Activated B cell treated with CpG ODN at 0.5 μM for 24 hours (primary cell): ENCODE measurements at regions of chrX and their contacts with region 1.

Region 1: GRCh38 chrX:9995855-9996339 is 28.7 kb downstream of the CLDN34 start:
- DNase-seq: peak; percentile 66
- ATAC-seq: peak; percentile 77
- H3K4me3 Mint-ChIP-seq: no peak overlapping the region
- H3K27ac Mint-ChIP-seq: no peak overlapping the region
- H3K4me1 Mint-ChIP-seq: peaks cover 12% of the 10 kb centered on the region
- H3K27me3 Mint-ChIP-seq: no peaks in the 10 kb centered on the region
- CTCF ChIP-seq: peak; percentile 76

Region 2: GRCh38 chrX:9873952-9874351 is 121.9 kb before region 1 on chrX:
- CTCF ChIA-PET with region 1: no interaction called
- POLR2A ChIA-PET with region 1: no interaction called
- intact Hi-C with region 1: loop called (anchors 1 kb)
- DNase-seq: peak; percentile 16
- ATAC-seq: peak; percentile 72
- H3K4me3 Mint-ChIP-seq: no peak overlapping the region
- H3K27ac Mint-ChIP-seq: no peak overlapping the region
- H3K4me1 Mint-ChIP-seq: peaks cover 2% of the 10 kb centered on the region
- H3K27me3 Mint-ChIP-seq: peaks cover 9% of the 10 kb centered on the region
- CTCF ChIP-seq: no peak

Region 3: GRCh38 chrX:9885150-9885549 is 110.7 kb before region 1 on chrX:
- CTCF ChIA-PET with region 1: interaction called, 5 read pairs
- POLR2A ChIA-PET with region 1: no interaction called
- intact Hi-C with region 1: loop called (anchors 1 kb)
- DNase-seq: peak; percentile 35
- ATAC-seq: peak; percentile 85
- H3K4me3 Mint-ChIP-seq: no peak overlapping the region
- H3K27ac Mint-ChIP-seq: no peak overlapping the region
- H3K4me1 Mint-ChIP-seq: peaks cover 2% of the 10 kb centered on the region
- H3K27me3 Mint-ChIP-seq: peaks cover 3% of the 10 kb centered on the region
- CTCF ChIP-seq: no peak

Region 4: DNA sequence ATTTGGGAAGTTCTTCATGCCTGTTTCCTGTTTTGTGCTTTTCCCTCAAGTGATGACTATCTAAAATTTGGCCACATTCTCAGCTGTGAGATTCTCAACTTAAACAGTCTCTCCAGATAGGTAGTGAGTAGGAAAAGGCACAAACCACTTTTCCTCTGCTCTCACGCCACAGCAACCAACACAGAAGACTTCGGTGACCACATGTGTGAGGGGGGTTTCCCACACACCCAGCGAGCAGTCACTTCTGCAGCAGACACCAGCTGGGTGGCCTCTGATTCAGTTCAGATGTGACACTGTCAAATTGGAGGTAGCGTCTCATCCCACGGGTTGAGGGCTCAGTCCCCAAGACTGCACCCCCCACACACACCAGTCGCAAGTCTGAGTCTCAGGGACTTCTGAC is 53.8 kb before region 1 on chrX:
- CTCF ChIA-PET with region 1: no interaction called
- POLR2A ChIA-PET with region 1: no interaction called
- intact Hi-C with region 1: loop called (anchors 5 kb)
- DNase-seq: peak; percentile 26
- ATAC-seq: peak; percentile 84
- H3K4me3 Mint-ChIP-seq: peak overlapping the region; percentile 56
- H3K27ac Mint-ChIP-seq: peak overlapping the region; percentile 25
- H3K4me1 Mint-ChIP-seq: peaks cover 29% of the 10 kb centered on the region
- H3K27me3 Mint-ChIP-seq: no peaks in the 10 kb centered on the region
- CTCF ChIP-seq: no peak

Region 5: DNA sequence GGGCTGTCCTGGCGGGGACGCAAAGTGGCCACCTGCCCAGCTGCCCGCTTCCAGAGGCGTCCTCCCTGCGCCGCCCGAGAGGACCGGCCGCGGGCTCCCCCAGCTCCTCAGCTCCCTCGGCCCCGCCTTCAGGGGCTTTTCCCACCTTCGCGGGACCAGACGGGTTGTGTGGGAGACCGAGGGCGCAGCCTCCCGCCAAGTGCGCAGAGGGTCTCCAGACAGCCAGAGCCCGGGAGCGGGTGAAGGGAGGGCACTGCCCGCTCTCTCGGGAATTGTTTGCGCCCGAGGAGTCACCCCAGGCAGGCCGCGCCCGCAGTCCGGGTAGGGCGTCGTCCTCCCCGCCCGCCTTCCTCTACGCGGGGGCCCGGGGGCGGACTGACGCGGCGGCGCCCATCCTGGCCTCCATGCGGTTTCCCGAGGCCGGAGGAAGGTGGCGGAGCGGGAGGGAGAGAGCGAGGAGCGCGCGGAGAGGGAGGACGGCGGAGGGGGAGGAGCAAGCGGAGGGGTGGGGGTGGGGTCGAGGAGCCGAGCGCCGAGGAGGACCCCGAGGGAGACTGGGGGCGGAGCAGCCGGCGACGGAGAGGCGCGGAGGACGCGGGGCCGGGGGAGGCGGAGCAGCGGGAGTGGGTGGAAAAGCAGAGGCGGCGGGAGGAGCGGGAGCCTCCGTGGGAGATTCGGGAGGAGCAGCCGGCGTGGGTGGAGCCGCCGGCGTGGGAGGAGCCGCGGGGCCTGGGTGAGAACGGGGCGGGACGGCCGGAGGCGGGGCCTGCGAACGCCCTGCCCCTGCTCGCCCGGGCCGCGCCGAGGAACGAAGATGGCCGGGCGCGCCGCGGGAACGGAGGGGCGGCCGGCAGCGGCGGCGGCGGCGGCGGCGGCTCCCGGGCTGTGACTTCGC is 18.8 kb after region 1 on chrX:
- CTCF ChIA-PET with region 1: interaction called, 5 read pairs
- POLR2A ChIA-PET with region 1: interaction called, 13 read pairs
- intact Hi-C with region 1: loop called (anchors 2 kb)
- DNase-seq: peak; percentile 81
- ATAC-seq: peak; percentile 83
- H3K4me3 Mint-ChIP-seq: peak overlapping the region; percentile 83
- H3K27ac Mint-ChIP-seq: peak overlapping the region; percentile 69
- H3K4me1 Mint-ChIP-seq: peaks cover 63% of the 10 kb centered on the region
- H3K27me3 Mint-ChIP-seq: no peaks in the 10 kb centered on the region
- CTCF ChIP-seq: no peak

Region 6: DNA sequence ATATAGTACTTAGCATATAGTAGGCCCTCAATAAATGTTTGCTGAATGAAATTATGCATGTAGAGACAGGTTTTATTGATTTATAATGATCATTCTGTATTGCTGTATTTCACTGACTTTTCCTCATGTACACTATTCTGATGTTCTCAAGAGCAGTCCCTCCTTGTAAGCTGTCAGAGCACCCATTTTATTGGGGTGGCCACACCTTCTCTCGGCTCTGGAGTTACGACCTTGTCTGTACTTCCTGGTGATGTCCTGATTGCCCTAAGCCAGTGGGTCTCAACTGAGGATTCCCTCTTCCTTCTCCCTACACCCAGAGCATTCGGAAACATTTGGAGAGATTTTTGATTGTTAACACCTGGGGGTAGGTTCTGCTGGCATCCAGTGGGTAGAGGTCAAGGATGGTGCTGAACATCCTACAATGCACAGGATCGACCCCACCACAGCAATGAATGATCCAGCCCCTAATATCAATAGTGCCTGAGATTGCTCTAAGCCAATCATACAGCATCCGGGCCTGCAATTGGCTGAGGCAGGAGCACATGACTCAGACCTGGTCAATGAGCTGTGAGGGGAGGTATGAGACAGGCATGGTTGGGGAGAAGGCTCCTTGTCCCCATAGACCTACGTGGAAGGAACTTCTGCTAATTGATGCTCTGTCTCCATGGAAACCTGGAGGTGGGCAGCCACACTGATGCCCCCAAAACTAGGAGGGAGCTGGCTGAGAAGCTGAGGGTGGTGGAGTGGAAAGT is 30.0 kb after region 1 on chrX:
- CTCF ChIA-PET with region 1: no interaction called
- POLR2A ChIA-PET with region 1: no interaction called
- intact Hi-C with region 1: no loop called
- DNase-seq: no peak
- ATAC-seq: no peak
- H3K4me3 Mint-ChIP-seq: no peak overlapping the region
- H3K27ac Mint-ChIP-seq: no peak overlapping the region
- H3K4me1 Mint-ChIP-seq: peaks cover 29% of the 10 kb centered on the region
- H3K27me3 Mint-ChIP-seq: no peaks in the 10 kb centered on the region
- CTCF ChIP-seq: no peak

Region 7: DNA sequence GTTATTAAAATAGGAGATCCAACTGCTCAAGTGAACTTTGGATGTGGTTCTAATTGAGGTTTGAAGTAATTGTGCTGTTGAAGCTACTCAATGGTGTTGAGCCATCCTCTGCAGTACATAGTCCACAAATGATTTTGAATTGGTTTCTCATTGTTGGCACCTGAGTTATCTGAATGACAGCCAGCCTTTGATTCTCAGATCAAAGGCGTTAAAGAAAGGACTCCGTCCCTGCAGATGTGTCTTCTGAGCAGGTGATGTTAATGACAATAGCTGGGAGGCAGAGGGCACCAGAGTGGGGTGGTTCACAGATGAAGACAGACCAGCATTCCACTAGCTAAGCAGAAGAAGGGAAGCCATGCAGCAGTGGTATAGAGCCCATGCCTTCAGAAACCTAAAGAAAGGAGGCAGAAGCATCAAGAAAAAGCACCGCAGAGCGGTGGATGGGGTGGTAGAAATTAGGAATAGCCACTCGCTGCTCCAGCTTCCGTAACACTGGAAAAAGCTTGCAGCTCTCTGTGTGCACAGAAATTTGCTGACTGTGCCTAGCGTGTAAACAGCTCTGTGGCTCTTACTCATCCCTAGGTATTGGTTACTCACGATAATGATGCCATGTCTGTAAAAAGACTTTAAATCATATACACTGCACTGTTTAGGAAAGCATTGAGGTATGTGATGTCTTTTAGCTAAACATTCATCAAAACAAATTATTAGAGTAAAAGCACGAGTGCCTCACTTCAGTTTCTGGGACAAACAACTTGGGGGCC is 81.7 kb after region 1 on chrX:
- CTCF ChIA-PET with region 1: no interaction called
- POLR2A ChIA-PET with region 1: no interaction called
- intact Hi-C with region 1: loop called (anchors 5 kb)
- DNase-seq: no peak
- ATAC-seq: no peak
- H3K4me3 Mint-ChIP-seq: no peak overlapping the region
- H3K27ac Mint-ChIP-seq: no peak overlapping the region
- H3K4me1 Mint-ChIP-seq: peaks cover 13% of the 10 kb centered on the region
- H3K27me3 Mint-ChIP-seq: no peaks in the 10 kb centered on the region
- CTCF ChIP-seq: no peak